ENCODE measurements at regions of chr1 and their contacts with region 1.

Region 1: GRCh38 chr1:93846211-93846991 is 32.6 kb downstream of the DNTTIP2 start:
- DNase-seq: peak; percentile 90 to 97 (median 95)
- ATAC-seq: peak; percentile 76 to 82
- H3K4me3 ChIP-seq: peak overlapping the region; percentile 68
- H3K27ac ChIP-seq: peak overlapping the region; percentile 98
- H3K4me1 ChIP-seq: peaks cover 3% of the 10 kb centered on the region
- H3K27me3 ChIP-seq: no peaks in the 10 kb centered on the region

Region 2: GRCh38 chr1:93304716-93305138 is 541.7 kb before region 1 on chr1:
- intact Hi-C with region 1: loop called in 3 of 4 experiments (anchors 10 kb)
- DNase-seq: peak in 1 of 3 donors; percentile 15
- ATAC-seq: peak in 1 of 2 donors; percentile 67
- H3K4me3 ChIP-seq: no peak overlapping the region
- H3K27ac ChIP-seq: no peak overlapping the region
- H3K4me1 ChIP-seq: no peaks in the 10 kb centered on the region
- H3K27me3 ChIP-seq: no peaks in the 10 kb centered on the region

Region 3: GRCh38 chr1:93437976-93438605 is 408.3 kb before region 1 on chr1:
- intact Hi-C with region 1: loop called in 3 of 4 experiments (anchors 5 to 10 kb)
- DNase-seq: no peak
- ATAC-seq: peak in 1 of 2 donors; percentile 45
- H3K4me3 ChIP-seq: no peak overlapping the region
- H3K27ac ChIP-seq: no peak overlapping the region
- H3K4me1 ChIP-seq: no peaks in the 10 kb centered on the region
- H3K27me3 ChIP-seq: no peaks in the 10 kb centered on the region

Region 4: GRCh38 chr1:93447516-93448291 is 398.7 kb before region 1 on chr1 and contains the start of gene FNBP1L:
- intact Hi-C with region 1: loop called in 1 of 4 experiments (anchors 5 kb)
- DNase-seq: peak; percentile 81 to 92 (median 89)
- ATAC-seq: peak; percentile 97 to 98
- H3K4me3 ChIP-seq: peak within 1 kb of the TSS; percentile 98
- H3K27ac ChIP-seq: peak within 1 kb of the TSS; percentile 91
- H3K4me1 ChIP-seq: peaks cover 2% of the 10 kb centered on the region
- H3K27me3 ChIP-seq: no peaks in the 10 kb centered on the region
- total RNA-seq, gene FNBP1L: 15.8 to 21.8 (median 20.0) TPM

Region 5: DNA sequence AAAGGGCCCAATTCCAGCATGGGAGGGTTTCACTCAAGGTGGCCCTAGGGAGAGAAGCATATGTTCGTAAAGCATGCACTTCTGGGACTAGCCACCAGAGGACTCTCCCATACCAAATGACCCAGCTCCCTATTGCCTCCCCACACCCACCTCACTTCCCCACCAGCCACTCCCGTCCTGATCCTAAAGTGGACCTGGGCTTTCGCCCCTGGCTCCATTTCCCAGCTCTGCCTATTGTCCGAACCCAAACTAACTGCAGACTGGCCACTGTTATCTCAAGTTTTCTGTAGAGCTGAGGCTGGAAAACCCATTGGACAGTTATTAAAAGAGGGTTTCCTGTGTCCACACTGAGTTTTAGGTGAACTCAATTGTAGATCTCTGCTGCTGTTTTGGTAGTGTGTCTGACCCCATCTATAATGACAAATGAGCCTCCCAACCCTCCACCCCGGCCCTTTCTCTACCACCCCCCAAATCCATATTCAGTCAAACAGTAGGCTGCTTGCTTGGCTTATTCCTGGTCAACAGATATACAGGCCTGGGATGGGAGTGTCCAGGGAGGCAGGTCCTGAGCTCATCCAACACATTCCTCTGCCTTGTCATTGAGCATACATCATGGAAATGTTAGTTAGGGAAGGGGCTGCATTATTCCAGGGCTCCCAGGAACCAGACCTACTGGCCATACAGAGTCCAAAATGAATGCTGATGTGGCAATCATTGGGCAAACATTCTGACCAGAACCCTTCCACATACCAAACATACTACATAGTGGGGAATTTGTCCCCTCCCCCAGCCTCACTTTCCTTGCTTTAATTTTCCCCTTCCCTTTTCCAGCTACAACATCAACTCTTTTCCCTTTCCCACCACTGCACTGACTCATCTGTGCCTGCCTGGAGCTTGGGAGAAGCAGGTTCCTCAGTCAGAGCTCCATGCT is 215.4 kb after region 1 on chr1:
- intact Hi-C with region 1: no loop called
- DNase-seq: peak; percentile 72 to 84 (median 81)
- ATAC-seq: peak; percentile 84 to 89
- H3K4me3 ChIP-seq: no peak overlapping the region
- H3K27ac ChIP-seq: no peak overlapping the region
- H3K4me1 ChIP-seq: peaks cover 9% of the 10 kb centered on the region
- H3K27me3 ChIP-seq: no peaks in the 10 kb centered on the region